Common myeloid progenitor, CD34-positive (primary cell): ENCODE measurements at regions of chr4 and their contacts with region 1.

Region 1: GRCh38 chr4:138522366-138522765 is 280.2 kb upstream of the SLC7A11 start:
- DNase-seq: peak; percentile 3 to 22 (median 13)
- H3K4me3 ChIP-seq: no peak overlapping the region
- H3K27ac ChIP-seq: no peak overlapping the region
- H3K4me1 ChIP-seq: no peaks in the 10 kb centered on the region
- H3K27me3 ChIP-seq: peaks cover 0 to 4% (median 0%) of the 10 kb centered on the region in 5 experiments

Region 2: DNA sequence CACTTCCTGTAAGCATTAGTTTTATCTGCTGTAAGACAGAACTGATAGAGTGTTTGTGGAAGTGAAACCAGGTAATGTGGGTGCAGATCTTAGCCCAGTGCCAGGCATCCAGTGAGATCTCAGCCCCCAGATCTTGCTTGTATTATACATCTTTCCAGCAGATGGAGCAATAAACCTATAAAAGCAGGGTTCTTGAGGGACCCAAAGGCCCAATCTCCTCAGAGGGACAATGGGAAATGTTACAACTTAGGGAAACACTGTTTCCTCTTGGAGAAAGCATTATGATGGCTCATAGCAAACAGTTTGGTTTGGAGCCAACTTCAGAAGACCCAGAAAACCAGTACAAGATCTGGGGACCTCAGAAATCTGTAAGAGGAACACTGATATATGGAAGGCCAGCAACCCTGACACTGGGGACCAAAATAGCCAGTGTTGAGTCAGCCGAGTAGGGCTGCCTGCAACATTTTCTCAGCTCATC is 486.5 kb before region 1 on chr4:
- CTCF ChIA-PET with region 1: interaction called, 13 read pairs
- POLR2A ChIA-PET with region 1: no interaction called
- DNase-seq: peak; percentile 25 to 51 (median 48)
- H3K4me3 ChIP-seq: no peak overlapping the region
- H3K27ac ChIP-seq: no peak overlapping the region
- H3K4me1 ChIP-seq: peaks cover 0 to 2% (median 0%) of the 10 kb centered on the region in 4 experiments
- H3K27me3 ChIP-seq: no peaks in the 10 kb centered on the region

Region 3: DNA sequence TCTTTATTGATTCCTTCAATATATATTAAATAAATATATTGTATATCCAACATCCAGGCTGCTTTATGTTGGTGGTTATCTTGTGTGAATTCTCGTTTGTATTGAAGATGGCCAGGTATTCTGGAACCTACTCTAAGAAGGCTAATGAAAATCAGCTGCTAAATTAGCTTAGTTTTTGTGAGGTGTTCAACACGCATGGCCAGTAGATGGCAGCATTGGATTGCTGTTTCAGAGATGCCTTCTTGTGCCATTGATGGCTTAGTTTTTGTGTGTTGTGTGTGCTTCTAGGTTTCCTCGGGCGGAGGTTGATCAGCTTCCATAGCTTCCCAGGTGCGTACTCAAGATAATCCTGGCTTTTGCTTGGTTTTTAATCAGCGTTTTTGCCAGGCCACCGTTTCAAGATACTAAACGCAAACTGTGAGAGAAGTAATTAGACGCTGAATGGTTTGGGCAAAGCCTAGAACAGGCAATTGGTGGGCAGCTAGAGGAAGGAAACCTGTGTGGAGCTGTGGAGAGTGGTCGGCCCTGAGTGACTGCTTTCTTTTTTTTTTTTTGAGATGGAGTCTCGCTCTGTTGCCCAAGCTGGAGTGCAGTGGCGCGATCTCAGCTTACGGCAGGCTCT is 508.4 kb after region 1 on chr4:
- CTCF ChIA-PET with region 1: no interaction called
- POLR2A ChIA-PET with region 1: no interaction called
- DNase-seq: peak; percentile 86 to 93 (median 90)
- H3K4me3 ChIP-seq: peak overlapping the region in 5 of 7 experiments; percentile 21 to 73 (median 50)
- H3K27ac ChIP-seq: peak overlapping the region in 1 of 2 experiments; percentile 23
- H3K4me1 ChIP-seq: peaks cover 2 to 7% (median 6%) of the 10 kb centered on the region in 4 experiments
- H3K27me3 ChIP-seq: no peaks in the 10 kb centered on the region